Dorsolateral prefrontal cortex (tissue), 120 donors: ENCODE measurements at regions of chr4 and their contacts with region 1.

Region 1: GRCh38 chr4:145481164-145481941 is at the start of gene SMAD1:
- DNase-seq: peak; percentile 70 to 90 (median 85)
- H3K4me3 ChIP-seq: peak within 1 kb of the TSS; percentile 48 to 96 (median 86)
- H3K27ac ChIP-seq: peak within 1 kb of the TSS; percentile 62 to 98 (median 93)
- H3K27me3 ChIP-seq: no peaks in the 10 kb centered on the region
- CTCF ChIP-seq: peak in 7 of 56 donors; percentile 1 to 25 (median 11)
- total RNA-seq, gene SMAD1: 18.8 to 78.1 (median 34.1) TPM

Region 2: DNA sequence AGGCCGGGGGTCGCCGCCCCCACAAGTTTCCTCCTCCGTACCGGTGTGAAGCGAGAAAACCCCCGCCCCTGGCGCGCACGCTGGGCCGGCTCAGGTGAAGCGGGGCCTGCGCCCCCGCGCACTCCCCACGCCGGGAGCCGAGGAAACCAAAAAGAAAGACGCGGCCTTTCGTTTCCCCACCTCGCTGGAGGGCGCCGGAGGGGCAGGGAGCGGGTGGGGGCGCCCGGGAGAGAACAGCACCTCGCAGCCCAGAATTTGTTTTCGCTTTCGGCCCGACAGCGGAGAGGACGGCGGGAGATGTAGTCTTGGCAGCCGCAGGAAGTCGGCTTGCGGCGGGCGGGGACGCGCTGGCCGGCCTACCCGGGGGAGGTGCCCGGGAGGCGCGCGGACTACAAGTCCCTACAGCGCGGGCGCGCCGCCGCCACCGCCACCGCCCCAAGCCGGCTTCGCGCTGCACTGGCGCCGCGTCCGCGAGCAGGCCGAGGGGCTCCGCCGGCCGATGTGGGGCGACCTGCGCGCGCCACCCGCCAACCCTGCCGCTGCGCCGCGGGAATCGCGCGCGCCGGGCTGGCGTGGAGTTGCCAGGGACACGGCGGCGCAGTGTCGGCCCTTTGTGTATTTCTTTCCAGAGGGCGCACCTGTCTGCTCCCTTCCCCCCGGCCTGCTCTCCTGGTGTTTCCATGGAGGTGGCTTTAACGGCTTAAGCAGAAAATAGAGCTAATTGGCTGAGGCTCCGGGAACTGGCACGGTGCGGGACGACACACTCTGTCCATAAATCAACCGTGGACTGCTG is 300.9 kb before region 1 on chr4 and contains the start of gene OTUD4:
- intact Hi-C with region 1: loop called (anchors 5 to 10 kb)
- DNase-seq: peak; percentile 87 to 97 (median 94)
- H3K4me3 ChIP-seq: peak within 1 kb of the TSS; percentile 63 to 94 (median 83)
- H3K27ac ChIP-seq: peak within 1 kb of the TSS; percentile 85 to 99 (median 95)
- H3K27me3 ChIP-seq: no peaks in the 10 kb centered on the region
- CTCF ChIP-seq: peak in 39 of 56 donors; percentile 7 to 59 (median 32)
- total RNA-seq, gene OTUD4: 33.5 to 84.1 (median 49.7) TPM

Region 3: GRCh38 chr4:145404761-145405160 is 76.6 kb before region 1 on chr4:
- intact Hi-C with region 1: no loop called
- DNase-seq: no peak
- H3K4me3 ChIP-seq: no peak overlapping the region
- H3K27ac ChIP-seq: no peak overlapping the region
- H3K27me3 ChIP-seq: no peaks in the 10 kb centered on the region
- CTCF ChIP-seq: no peak

Region 4: GRCh38 chr4:145531223-145531622 is 49.9 kb after region 1 on chr4:
- intact Hi-C with region 1: loop called in 1 of 2 experiments (anchors 5 kb)
- DNase-seq: peak in 9 of 10 donors; percentile 36 to 74 (median 63)
- H3K4me3 ChIP-seq: no peak overlapping the region
- H3K27ac ChIP-seq: peak overlapping the region in 13 of 59 donors; percentile 20 to 57 (median 34)
- H3K27me3 ChIP-seq: no peaks in the 10 kb centered on the region
- CTCF ChIP-seq: peak in 1 of 56 donors; percentile 14

Region 5: DNA sequence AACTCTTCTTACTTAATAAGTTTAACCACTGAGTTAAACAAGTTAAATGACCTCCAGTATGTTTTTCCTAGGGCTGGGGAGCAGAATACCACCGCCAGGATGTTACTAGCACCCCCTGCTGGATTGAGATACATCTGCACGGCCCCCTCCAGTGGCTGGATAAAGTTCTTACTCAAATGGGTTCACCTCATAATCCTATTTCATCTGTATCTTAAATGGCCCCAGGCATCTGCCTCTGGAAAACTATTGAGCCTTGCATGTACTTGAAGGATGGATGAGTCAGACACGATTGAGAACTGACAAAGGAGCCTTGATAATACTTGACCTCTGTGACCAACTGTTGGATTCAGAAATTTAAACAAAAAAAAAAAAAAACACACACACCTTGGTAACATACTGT is 76.4 kb after region 1 on chr4:
- intact Hi-C with region 1: loop called (anchors 5 to 10 kb)
- DNase-seq: peak in 4 of 10 donors; percentile 25 to 58 (median 34)
- H3K4me3 ChIP-seq: no peak overlapping the region
- H3K27ac ChIP-seq: no peak overlapping the region
- H3K27me3 ChIP-seq: no peaks in the 10 kb centered on the region
- CTCF ChIP-seq: peak in 55 of 56 donors; percentile 62 to 96 (median 87)

Region 6: GRCh38 chr4:146175541-146176453 is 694.4 kb after region 1 on chr4 and contains the start of gene LSM6:
- intact Hi-C with region 1: loop called in 1 of 2 experiments (anchors 10 kb)
- DNase-seq: peak; percentile 86 to 94 (median 92)
- H3K4me3 ChIP-seq: peak within 1 kb of the TSS; percentile 66 to 100 (median 91)
- H3K27ac ChIP-seq: peak within 1 kb of the TSS; percentile 56 to 97 (median 91)
- H3K27me3 ChIP-seq: no peaks in the 10 kb centered on the region
- CTCF ChIP-seq: peak in 41 of 56 donors; percentile 13 to 57 (median 38)
- total RNA-seq, gene LSM6: 14.6 to 47.4 (median 24.5) TPM